Activated CD4-positive, alpha-beta T cell treated with anti-CD3 and anti-CD28 coated beads, Interleukin-2, amount 10 ng/mL, durations not matched to agents 24 days and 14 days (primary cell): ENCODE measurements at regions of chr11 and their contacts with region 1.

Region 1: GRCh38 chr11:19951558-19952115 is 208.6 kb downstream of the DBX1 start:
- DNase-seq: peak; percentile 71
- H3K4me3 Mint-ChIP-seq: peak overlapping the region; percentile 59
- H3K27ac Mint-ChIP-seq: no peak overlapping the region
- H3K4me1 Mint-ChIP-seq: peaks cover 6% of the 10 kb centered on the region
- H3K27me3 Mint-ChIP-seq: peaks cover 22% of the 10 kb centered on the region

Region 2: DNA sequence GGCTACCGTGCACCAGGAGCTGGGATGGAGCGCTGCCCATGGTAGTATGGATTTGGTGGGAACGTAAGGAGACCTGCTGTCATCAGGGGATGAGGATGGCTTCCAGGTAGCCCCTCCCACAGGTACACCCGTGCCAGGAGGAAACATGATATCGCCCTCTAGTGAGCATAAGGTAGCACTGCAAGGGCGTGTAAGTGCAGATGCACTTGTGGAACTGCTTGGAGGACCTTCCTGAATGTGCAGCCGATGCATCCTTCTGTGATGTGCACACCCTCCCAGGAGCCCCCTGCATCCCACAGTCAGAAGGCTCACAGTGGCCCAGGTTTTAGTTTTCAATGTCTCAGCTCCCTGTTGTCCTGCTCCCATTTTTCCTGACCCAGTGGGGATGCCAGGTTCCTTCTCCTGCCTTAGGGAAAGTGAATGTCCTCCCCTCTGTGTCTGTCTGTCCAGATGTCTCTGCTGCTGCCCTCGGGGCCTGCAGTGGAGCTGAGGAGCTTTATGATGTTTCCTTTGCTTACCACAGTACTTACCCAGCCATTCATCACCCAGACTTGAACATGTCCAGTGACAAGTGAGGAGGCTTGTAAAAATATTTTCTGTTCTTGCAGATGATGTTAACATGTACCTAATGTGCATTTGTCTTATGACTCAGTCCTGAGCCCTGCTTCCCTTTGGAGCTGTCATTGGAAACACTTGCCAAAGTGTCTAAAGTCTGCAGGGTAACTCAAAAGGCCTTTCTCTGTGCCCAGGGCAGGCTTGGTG is 159.5 kb after region 1 on chr11:
- intact Hi-C with region 1: loop called (anchors 1 kb)
- DNase-seq: peak; percentile 82
- H3K4me3 Mint-ChIP-seq: no peak overlapping the region
- H3K27ac Mint-ChIP-seq: no peak overlapping the region
- H3K4me1 Mint-ChIP-seq: peaks cover 1% of the 10 kb centered on the region
- H3K27me3 Mint-ChIP-seq: no peaks in the 10 kb centered on the region

Region 3: DNA sequence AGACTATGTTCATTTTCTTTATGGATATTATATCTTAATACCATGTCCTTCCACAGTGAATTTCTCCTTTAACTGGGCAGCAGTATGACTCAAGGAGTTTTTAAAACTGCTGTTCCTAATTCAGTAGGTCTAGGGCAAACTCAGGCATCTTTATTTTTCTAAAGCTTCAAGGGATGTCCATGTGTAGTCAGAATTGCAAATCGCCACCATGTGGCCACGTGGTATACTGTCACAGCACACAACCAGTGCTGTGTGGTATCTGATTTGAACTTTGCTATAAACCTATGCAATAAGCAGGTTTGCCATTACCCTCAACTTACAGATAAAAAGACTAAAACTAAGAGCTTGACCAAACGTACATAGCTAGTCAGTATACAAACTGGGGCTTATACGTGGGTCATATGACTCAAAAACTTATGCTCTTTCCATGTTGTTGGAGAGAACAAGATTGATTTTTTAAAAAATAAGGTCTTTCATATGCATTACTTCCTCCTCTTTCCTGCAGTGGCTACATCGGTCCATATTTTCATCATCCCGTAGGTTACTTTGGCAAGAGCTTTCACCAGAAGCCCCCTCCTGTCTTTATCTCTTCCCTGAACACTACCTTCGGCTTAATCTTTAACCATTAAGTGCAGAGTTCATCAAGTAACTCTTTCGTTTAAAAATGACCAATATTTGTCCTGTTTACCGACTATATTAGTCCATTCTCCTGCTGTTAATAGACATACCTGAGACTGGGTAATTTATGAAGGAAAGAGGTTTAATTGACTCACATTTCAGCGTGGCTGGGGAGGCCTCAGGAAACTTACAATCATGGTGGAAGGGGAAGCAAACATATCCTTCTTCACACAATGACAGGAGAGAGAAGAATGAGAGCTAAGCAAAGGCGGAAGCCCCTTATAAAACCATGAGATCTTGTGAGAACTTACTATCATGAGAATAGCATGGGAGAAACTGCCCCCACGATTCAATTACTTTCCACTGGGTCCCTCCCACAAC is 403.9 kb after region 1 on chr11:
- intact Hi-C with region 1: loop called (anchors 10 kb)
- DNase-seq: peak; percentile 78
- H3K4me3 Mint-ChIP-seq: no peak overlapping the region
- H3K27ac Mint-ChIP-seq: no peak overlapping the region
- H3K4me1 Mint-ChIP-seq: peaks cover 12% of the 10 kb centered on the region
- H3K27me3 Mint-ChIP-seq: peaks cover 6% of the 10 kb centered on the region